Activated CD4-positive, alpha-beta memory T cell treated with anti-CD3 and anti-CD28 coated beads for 36 hours (primary cell): ENCODE measurements at regions of chr6 and their contacts with region 1.

Region 1: DNA sequence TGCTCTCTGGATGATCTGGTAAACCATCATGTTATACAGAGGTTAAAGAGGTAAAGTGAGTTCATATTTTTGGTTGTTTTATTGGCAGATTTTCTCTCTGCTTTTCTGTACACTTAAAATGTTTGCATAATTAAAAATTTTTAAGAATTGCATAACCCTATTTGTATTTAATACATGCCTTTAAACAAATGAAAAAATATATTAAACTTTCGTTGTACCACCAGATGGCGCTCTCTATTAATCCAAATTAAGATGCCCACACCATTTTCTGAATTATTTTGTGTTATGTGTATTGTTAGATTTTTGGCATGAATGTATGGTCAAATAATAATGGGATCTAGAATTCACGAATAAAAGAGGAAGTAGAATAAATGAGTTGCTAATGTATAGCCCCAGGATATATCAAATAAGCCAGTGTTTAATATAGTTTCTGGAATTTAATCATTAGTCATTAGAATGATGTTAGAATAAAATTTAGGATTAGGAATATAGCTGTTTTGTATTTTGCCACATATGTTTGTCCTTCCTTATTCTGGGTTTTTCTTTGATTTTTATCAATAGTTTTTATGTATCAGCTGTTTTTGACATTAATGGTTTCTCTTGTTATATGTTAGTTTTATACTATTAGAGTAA is 38.9 kb downstream of the SMAP1 start:
- DNase-seq: no peak
- H3K4me3 Mint-ChIP-seq: no peak overlapping the region
- H3K27ac Mint-ChIP-seq: no peak overlapping the region
- H3K4me1 Mint-ChIP-seq: peaks cover 47% of the 10 kb centered on the region
- H3K27me3 Mint-ChIP-seq: no peaks in the 10 kb centered on the region

Region 2: GRCh38 chr6:70028926-70029325 is 677.7 kb before region 1 on chr6:
- CTCF ChIA-PET with region 1: no interaction called
- POLR2A ChIA-PET with region 1: no interaction called
- intact Hi-C with region 1: no loop called
- DNase-seq: no peak
- H3K4me3 Mint-ChIP-seq: no peak overlapping the region
- H3K27ac Mint-ChIP-seq: no peak overlapping the region
- H3K4me1 Mint-ChIP-seq: no peaks in the 10 kb centered on the region
- H3K27me3 Mint-ChIP-seq: peaks cover 4% of the 10 kb centered on the region

Region 3: GRCh38 chr6:70717038-70717801 is 10.6 kb after region 1 on chr6:
- CTCF ChIA-PET with region 1: interaction called, 8 read pairs
- POLR2A ChIA-PET with region 1: no interaction called
- intact Hi-C with region 1: loop called (anchors 2 kb)
- DNase-seq: no peak
- H3K4me3 Mint-ChIP-seq: no peak overlapping the region
- H3K27ac Mint-ChIP-seq: peak overlapping the region; percentile 59
- H3K4me1 Mint-ChIP-seq: peaks cover 44% of the 10 kb centered on the region
- H3K27me3 Mint-ChIP-seq: no peaks in the 10 kb centered on the region

Region 4: DNA sequence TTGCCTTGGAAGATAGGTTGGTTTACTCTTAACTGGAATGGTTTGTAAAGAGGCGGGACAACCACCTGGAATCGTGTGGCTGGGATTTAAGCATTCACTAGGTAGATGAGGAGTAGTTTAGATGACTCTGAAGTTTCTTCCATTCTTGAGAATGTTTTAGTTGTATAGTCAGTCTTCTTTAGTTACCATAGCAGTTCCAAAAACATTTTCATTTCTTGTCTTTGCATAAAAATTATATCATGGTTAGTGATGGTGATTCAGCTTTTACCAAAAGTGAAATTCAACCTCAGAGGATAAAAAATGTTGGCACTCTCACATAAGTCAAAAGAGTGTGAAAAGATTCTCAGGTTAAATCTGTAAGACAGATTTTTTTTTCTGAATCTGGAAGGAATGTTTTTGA is 31.4 kb after region 1 on chr6:
- CTCF ChIA-PET with region 1: interaction called, 3 read pairs
- POLR2A ChIA-PET with region 1: no interaction called
- intact Hi-C with region 1: loop called (anchors 5 kb)
- DNase-seq: no peak
- H3K4me3 Mint-ChIP-seq: no peak overlapping the region
- H3K27ac Mint-ChIP-seq: peak overlapping the region; percentile 14
- H3K4me1 Mint-ChIP-seq: peaks cover 26% of the 10 kb centered on the region
- H3K27me3 Mint-ChIP-seq: no peaks in the 10 kb centered on the region

Region 5: DNA sequence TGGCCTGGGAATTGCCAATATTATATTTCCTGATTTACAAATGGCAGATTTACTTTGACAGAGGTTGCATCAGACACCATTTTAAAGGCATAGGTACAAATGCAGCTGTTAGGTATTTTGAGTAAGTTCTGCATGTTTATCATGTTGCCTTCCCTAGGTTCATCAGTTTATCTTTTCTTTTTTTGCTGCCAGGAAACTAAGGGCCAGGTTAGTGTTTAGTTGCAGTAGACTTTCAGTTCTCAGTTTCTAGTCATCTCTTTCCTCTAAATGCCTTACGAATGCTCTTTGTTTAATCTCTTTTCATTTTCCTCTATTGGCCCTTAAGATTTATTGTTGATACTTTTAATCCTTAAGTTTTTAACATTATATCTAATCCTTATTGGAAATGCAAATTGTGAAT is 91.0 kb after region 1 on chr6:
- CTCF ChIA-PET with region 1: no interaction called
- POLR2A ChIA-PET with region 1: no interaction called
- intact Hi-C with region 1: loop called (anchors 5 kb)
- DNase-seq: no peak
- H3K4me3 Mint-ChIP-seq: no peak overlapping the region
- H3K27ac Mint-ChIP-seq: no peak overlapping the region
- H3K4me1 Mint-ChIP-seq: peaks cover 21% of the 10 kb centered on the region
- H3K27me3 Mint-ChIP-seq: no peaks in the 10 kb centered on the region

Region 6: GRCh38 chr6:70955441-70956190 is 249.0 kb after region 1 on chr6:
- CTCF ChIA-PET with region 1: interaction called, 36 read pairs
- POLR2A ChIA-PET with region 1: no interaction called
- intact Hi-C with region 1: loop called (anchors 1 kb)
- DNase-seq: peak; percentile 91
- H3K4me3 Mint-ChIP-seq: peak overlapping the region; percentile 70
- H3K27ac Mint-ChIP-seq: no peak overlapping the region
- H3K4me1 Mint-ChIP-seq: peaks cover 11% of the 10 kb centered on the region
- H3K27me3 Mint-ChIP-seq: peaks cover 42% of the 10 kb centered on the region

Region 7: DNA sequence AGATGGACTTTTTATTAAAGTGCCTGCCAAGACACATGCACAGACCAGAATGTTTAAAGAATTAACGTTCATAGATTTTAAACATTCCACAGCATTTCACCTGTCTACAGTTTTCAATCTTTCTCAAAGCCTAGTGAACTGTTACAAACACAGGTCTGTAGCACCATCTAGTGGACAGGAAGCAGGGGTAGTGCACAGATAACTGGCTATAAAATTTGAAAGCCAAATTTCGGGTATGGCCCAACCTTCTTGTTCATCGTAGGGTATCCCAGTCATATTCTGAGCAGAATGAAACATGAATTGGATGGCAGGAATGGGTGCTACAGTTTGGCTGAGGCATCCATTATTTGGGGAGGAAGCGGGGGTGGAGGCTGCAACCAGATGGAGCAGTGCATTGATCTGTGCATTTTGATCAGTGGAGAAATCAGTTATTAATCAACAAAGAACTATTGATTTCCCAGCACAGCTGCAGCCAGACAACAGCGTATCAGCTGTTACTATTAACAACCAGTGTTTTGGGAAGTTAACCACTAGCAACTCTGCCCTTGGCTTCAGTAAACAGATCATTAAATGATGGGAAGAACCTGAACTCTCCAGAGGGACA is 306.4 kb after region 1 on chr6:
- CTCF ChIA-PET with region 1: interaction called, 6 read pairs
- POLR2A ChIA-PET with region 1: no interaction called
- intact Hi-C with region 1: loop called (anchors 2 kb)
- DNase-seq: no peak
- H3K4me3 Mint-ChIP-seq: no peak overlapping the region
- H3K27ac Mint-ChIP-seq: no peak overlapping the region
- H3K4me1 Mint-ChIP-seq: no peaks in the 10 kb centered on the region
- H3K27me3 Mint-ChIP-seq: peaks cover 18% of the 10 kb centered on the region

Region 8: GRCh38 chr6:71478834-71479541 is 772.4 kb after region 1 on chr6:
- CTCF ChIA-PET with region 1: no interaction called
- POLR2A ChIA-PET with region 1: no interaction called
- intact Hi-C with region 1: no loop called
- DNase-seq: no peak
- H3K4me3 Mint-ChIP-seq: no peak overlapping the region
- H3K27ac Mint-ChIP-seq: no peak overlapping the region
- H3K4me1 Mint-ChIP-seq: peaks cover 2% of the 10 kb centered on the region
- H3K27me3 Mint-ChIP-seq: no peaks in the 10 kb centered on the region